ENCODE measurements at regions of chr15 and their contacts with region 1.

Region 1: DNA sequence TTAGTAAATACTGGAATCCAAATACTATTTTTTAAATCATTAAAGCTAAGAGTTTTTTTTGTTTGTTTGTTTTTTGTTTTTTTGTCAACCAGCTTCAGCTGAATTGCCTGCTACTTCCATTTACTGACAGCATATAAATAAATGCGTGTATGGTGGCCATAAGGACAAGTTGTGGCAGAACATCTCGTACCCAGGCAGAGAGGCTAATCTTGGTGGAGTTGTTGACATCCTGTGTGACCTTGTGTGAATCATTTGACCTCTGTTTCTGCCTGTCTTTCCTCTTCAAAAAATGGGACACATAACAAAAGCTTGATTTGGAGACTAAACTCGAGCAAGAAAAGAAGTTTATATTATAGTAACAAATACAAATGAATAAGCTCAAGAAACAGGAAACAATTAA is 734.2 kb downstream of the MCTP2 start:
- DNase-seq: no peak
- H3K4me3 Mint-ChIP-seq: no peak overlapping the region
- H3K27ac Mint-ChIP-seq: no peak overlapping the region
- H3K4me1 Mint-ChIP-seq: no peaks in the 10 kb centered on the region
- H3K27me3 Mint-ChIP-seq: no peaks in the 10 kb centered on the region
- CTCF ChIP-seq: no peak

Region 2: DNA sequence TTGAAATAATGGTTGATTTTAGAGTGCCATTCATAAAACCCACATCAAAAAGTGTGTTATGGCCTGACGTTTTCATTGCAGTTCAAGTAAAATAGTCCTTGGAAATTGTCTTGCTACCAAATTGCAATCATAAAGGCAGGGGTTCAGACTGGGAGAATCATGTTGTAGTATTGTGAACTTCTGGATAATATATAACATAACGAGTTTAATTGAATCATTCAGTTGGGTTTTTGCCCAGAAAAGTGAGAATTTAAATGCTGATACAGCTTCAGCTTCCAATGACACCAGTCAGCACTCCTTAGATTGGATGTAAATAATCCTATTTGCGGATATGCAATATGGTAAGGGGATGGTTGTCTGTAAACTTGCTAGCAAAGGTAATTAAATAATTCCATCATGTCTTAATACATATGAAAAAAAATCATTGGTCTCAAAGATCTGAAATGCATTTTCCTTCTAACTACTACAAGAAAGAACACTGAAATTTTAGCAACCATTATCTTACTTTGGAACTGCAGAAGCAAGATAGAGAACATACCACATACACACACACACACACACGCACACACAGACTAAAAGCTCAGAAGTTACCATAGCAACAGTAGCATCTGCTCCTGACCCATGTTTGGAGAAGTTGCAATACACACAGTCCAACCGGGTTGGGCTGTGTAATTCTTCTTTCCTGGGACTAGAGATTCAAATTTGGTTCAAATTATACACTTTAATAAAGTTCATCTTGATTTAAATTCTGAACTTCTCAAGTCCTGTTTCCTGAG is 678.7 kb after region 1 on chr15:
- CTCF ChIA-PET with region 1: interaction called, 10 read pairs
- intact Hi-C with region 1: no loop called
- DNase-seq: no peak
- H3K4me3 Mint-ChIP-seq: no peak overlapping the region
- H3K27ac Mint-ChIP-seq: no peak overlapping the region
- H3K4me1 Mint-ChIP-seq: no peaks in the 10 kb centered on the region
- H3K27me3 Mint-ChIP-seq: no peaks in the 10 kb centered on the region
- CTCF ChIP-seq: no peak

Measured in Calu3 (cell line).